ENCODE measurements at regions of chr9 and their contacts with region 1.

Region 1: DNA sequence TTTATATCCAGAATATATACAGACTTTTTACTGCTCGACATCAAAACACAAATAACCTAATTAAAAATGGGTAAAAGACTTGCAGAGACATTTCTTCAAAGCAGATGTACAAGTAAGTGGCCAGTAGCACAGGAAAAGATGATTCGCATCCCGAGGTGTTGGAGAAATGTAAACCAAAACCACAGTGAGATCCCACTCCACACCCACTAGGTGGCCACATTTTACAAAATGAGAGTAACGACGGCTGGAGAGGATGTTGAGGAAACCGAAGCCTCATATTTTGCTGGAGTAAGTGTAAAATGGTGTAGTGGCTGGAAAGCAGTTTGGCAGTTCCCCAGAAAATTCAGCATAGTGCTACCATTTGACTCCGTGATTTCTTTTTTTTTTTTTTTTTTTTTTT is 21.2 kb upstream of the GBGT1 start:
- DNase-seq: peak; percentile 32 to 60 (median 35)
- H3K4me3 ChIP-seq: no peak overlapping the region
- H3K4me3 Mint-ChIP-seq: peak overlapping the region in 1 of 8 donors; percentile 44
- H3K27ac ChIP-seq: no peak overlapping the region
- H3K27ac Mint-ChIP-seq: no peak overlapping the region
- H3K4me1 ChIP-seq: peaks cover 13% of the 10 kb centered on the region
- H3K4me1 Mint-ChIP-seq: peaks cover 8 to 10% (median 9%) of the 10 kb centered on the region in 4 donors
- H3K27me3 ChIP-seq: no peaks in the 10 kb centered on the region
- H3K27me3 Mint-ChIP-seq: peaks cover 15 to 26% of the 10 kb centered on the region in 2 donors

Region 2: GRCh38 chr9:133023117-133023890 is 161.7 kb before region 1 on chr9:
- CTCF ChIA-PET with region 1: interaction called, 4 read pairs
- POLR2A ChIA-PET with region 1: no interaction called
- intact Hi-C with region 1: loop called (anchors 10 kb)
- DNase-seq: peak in 4 of 5 donors; percentile 7 to 58 (median 14)
- H3K4me3 ChIP-seq: no peak overlapping the region
- H3K4me3 Mint-ChIP-seq: peak overlapping the region in 1 of 8 donors; percentile 54
- H3K27ac ChIP-seq: no peak overlapping the region
- H3K27ac Mint-ChIP-seq: peak overlapping the region in 2 of 7 donors; percentile 3 to 17
- H3K4me1 ChIP-seq: peaks cover 15% of the 10 kb centered on the region
- H3K4me1 Mint-ChIP-seq: peaks cover 4 to 22% (median 16%) of the 10 kb centered on the region in 4 donors
- H3K27me3 ChIP-seq: no peaks in the 10 kb centered on the region
- H3K27me3 Mint-ChIP-seq: peaks cover 1 to 3% of the 10 kb centered on the region in 2 donors

Region 3: GRCh38 chr9:133134891-133135745 is 49.8 kb before region 1 on chr9:
- CTCF ChIA-PET with region 1: no interaction called
- POLR2A ChIA-PET with region 1: no interaction called
- intact Hi-C with region 1: no loop called
- DNase-seq: peak in 3 of 5 donors; percentile 39 to 82 (median 44)
- H3K4me3 ChIP-seq: peak overlapping the region; percentile 3 to 27
- H3K4me3 Mint-ChIP-seq: peak overlapping the region in 7 of 8 donors; percentile 39 to 99 (median 79)
- H3K27ac ChIP-seq: peak overlapping the region; percentile 100
- H3K27ac Mint-ChIP-seq: peak overlapping the region; percentile 100
- H3K4me1 ChIP-seq: peaks cover 99% of the 10 kb centered on the region
- H3K4me1 Mint-ChIP-seq: peaks cover 42 to 83% (median 64%) of the 10 kb centered on the region in 4 donors
- H3K27me3 ChIP-seq: no peaks in the 10 kb centered on the region
- H3K27me3 Mint-ChIP-seq: no peaks in the 10 kb centered on the region

Region 4: DNA sequence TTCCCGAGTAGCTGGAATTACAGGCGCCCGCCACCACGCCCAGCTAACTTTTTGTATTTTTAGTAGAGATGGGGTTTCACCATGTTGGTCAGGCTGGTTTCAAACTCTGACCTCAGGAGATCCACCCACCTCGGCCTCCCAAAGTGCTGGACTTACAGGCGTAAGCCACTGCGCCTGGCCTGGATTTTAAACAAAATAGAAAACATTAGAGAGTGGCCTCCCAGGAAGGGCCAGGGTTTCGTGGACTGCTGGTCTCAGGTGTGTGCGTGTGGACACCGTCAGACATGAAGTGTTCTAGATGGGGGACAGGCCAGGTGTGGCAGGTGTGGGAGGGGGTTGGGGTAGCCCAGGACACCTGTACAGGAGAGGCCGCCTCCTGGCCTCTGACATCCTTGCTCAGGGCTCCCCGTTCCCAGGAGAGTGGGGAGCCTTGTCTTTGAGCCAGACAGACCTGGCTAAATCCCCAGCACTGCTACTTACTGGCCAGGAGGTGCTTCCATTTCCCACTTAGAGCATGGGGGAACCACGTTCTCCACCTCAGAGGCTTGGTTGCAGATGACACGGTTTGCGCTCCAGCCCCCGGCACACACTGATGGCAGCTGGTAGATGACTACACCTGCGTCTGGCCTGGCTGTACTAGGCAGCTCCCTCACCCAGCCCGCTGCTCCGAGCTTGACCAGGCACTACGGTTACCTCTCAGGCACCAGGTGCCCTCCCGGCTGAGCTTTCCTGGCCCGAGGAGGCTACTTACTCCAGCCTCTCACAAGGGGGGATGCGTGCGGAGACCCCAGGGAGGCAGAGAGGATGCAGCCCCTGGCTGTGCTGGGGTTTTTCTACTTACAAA is 14.0 kb before region 1 on chr9:
- CTCF ChIA-PET with region 1: interaction called, 38 read pairs
- POLR2A ChIA-PET with region 1: no interaction called
- intact Hi-C with region 1: no loop called
- DNase-seq: no peak
- H3K4me3 ChIP-seq: no peak overlapping the region
- H3K4me3 Mint-ChIP-seq: no peak overlapping the region
- H3K27ac ChIP-seq: no peak overlapping the region
- H3K27ac Mint-ChIP-seq: no peak overlapping the region
- H3K4me1 ChIP-seq: no peaks in the 10 kb centered on the region
- H3K4me1 Mint-ChIP-seq: no peaks in the 10 kb centered on the region
- H3K27me3 ChIP-seq: no peaks in the 10 kb centered on the region
- H3K27me3 Mint-ChIP-seq: peaks cover 0 to 3% of the 10 kb centered on the region in 2 donors

Region 5: DNA sequence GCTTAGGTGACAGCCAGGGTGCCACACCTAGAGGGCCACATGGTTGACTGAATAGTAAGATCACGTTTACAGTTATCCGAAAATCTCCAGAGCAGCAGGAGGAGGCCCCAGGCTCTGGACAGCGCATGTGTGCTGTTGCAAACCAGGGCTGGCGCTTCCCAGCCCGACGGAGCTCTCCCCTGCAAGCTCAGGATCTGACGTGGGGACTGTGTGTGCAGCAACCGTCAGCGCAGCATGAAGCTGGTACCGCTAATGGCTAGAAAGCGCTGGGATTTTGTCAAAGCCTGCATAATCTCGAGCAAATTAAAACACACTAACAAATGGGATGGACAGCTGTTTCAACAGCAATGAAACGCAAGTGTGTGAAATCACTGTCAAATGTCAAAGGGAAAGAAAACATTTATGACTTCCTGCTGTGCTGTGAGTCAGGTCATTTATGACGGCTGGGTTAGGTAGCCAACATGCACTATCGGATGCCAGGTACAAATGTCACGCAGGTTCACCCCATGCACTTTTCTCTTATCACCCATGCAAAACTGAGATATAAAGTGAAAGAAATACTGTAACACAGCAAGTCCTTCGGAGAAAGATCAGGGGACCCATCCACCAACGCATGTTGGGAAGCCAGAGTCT is 183.4 kb after region 1 on chr9:
- CTCF ChIA-PET with region 1: interaction called, 52 read pairs
- POLR2A ChIA-PET with region 1: interaction called, 3 read pairs
- intact Hi-C with region 1: loop called (anchors 1 kb)
- DNase-seq: peak in 1 of 5 donors; percentile 13
- H3K4me3 ChIP-seq: no peak overlapping the region
- H3K4me3 Mint-ChIP-seq: peak overlapping the region; percentile 53 to 88 (median 67)
- H3K27ac ChIP-seq: peak overlapping the region; percentile 85
- H3K27ac Mint-ChIP-seq: peak overlapping the region; percentile 81 to 99 (median 96)
- H3K4me1 ChIP-seq: peaks cover 70% of the 10 kb centered on the region
- H3K4me1 Mint-ChIP-seq: peaks cover 49 to 78% (median 51%) of the 10 kb centered on the region in 4 donors
- H3K27me3 ChIP-seq: no peaks in the 10 kb centered on the region
- H3K27me3 Mint-ChIP-seq: no peaks in the 10 kb centered on the region

Region 6: DNA sequence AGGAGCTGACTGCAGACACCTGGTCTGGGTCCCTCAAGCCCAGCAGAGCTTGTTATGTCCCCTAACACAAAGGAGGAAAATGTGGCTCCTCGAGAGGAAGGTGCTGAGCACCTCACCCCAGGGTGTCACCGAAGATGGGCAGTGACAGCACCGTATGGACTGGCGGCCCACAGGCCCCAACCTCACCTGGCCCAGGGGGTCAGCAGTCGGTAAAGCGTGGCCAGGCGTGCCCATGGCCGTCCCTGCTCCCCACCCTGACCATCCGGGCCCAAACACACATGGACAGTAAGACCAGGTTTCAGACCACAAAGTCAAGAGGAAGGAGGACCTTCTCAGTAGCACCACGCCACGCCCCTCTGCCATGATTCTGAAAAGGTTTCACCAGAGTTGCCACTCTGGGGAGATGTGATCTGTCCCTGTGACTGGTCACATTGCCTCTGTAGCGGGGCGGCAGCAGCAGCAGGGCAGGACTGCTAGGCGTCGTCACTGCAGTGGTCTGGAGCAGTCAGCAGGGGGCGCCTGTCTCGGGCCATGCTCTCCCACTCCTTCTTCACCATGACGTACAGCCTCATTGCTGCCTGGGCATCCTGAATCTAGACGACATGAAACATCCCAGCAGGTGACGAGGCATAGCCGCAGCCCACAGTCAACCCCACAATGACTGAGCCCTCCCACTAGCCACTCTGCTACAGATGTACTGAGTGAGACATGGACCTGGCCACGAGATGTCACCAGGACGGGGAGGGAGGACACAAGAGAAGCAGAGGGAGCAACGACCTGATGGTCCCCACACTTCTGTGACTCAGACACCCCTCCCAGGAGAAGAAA is 221.7 kb after region 1 on chr9:
- CTCF ChIA-PET with region 1: interaction called, 14 read pairs
- POLR2A ChIA-PET with region 1: no interaction called
- intact Hi-C with region 1: no loop called
- DNase-seq: peak; percentile 75 to 82 (median 76)
- H3K4me3 ChIP-seq: no peak overlapping the region
- H3K4me3 Mint-ChIP-seq: no peak overlapping the region
- H3K27ac ChIP-seq: peak overlapping the region; percentile 18
- H3K27ac Mint-ChIP-seq: peak overlapping the region; percentile 28 to 94 (median 83)
- H3K4me1 ChIP-seq: peaks cover 5% of the 10 kb centered on the region
- H3K4me1 Mint-ChIP-seq: peaks cover 7 to 11% (median 8%) of the 10 kb centered on the region in 4 donors
- H3K27me3 ChIP-seq: no peaks in the 10 kb centered on the region
- H3K27me3 Mint-ChIP-seq: no peaks in the 10 kb centered on the region

Region 7: GRCh38 chr9:133478851-133479711 is 294.1 kb after region 1 on chr9 and contains the start of gene SLC2A6:
- CTCF ChIA-PET with region 1: interaction called, 66 read pairs
- POLR2A ChIA-PET with region 1: no interaction called
- intact Hi-C with region 1: no loop called
- DNase-seq: peak; percentile 73 to 79 (median 77)
- H3K4me3 ChIP-seq: peak within 1 kb of the TSS; percentile 42 to 55
- H3K4me3 Mint-ChIP-seq: peak within 1 kb of the TSS; percentile 67 to 83 (median 76)
- H3K27ac ChIP-seq: peak within 1 kb of the TSS; percentile 34
- H3K27ac Mint-ChIP-seq: peak within 1 kb of the TSS in 5 of 7 donors; percentile 55 to 81 (median 65)
- H3K4me1 ChIP-seq: peaks cover 15% of the 10 kb centered on the region
- H3K4me1 Mint-ChIP-seq: peaks cover 5 to 10% (median 8%) of the 10 kb centered on the region in 4 donors
- H3K27me3 ChIP-seq: no peaks in the 10 kb centered on the region
- H3K27me3 Mint-ChIP-seq: peaks cover 0 to 2% of the 10 kb centered on the region in 2 donors
- total RNA-seq, gene SLC2A6: 1.6 to 2.5 TPM

Region 8: DNA sequence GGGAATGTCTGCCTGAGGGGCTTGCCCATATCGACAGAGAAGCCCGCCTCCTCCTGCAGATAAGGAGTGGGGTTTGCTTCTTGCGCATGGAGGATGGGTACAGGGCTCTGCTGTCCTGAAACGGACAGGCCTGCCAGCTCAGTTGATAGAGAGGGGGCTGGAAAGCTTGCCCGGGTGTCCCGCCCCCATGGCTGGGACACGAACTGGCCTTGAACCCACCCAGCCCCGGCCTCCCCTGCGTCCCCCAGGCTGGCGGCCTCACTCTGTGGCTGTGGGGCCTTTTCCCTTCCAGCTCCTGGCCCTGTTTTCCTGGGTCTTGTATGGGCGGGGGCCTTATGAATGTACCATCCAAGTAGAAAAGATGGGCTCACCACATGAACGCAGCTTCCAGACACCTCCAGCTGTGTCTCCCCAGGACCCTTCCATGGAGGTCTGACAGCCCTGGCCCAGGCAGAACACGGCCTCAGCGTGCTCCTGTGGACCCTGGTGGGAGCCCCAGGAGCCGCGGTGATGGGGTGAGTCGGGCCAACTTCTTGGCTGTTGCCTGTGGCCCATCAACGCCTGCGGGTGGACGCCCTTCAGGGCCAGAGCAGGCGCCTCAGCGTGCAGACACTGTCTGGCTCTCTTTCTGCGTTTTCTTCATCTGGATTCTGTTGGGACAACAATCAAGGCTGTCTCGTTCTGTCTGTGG is 309.8 kb after region 1 on chr9:
- CTCF ChIA-PET with region 1: interaction called, 11 read pairs
- POLR2A ChIA-PET with region 1: no interaction called
- intact Hi-C with region 1: no loop called
- DNase-seq: no peak
- H3K4me3 ChIP-seq: no peak overlapping the region
- H3K4me3 Mint-ChIP-seq: no peak overlapping the region
- H3K27ac ChIP-seq: no peak overlapping the region
- H3K27ac Mint-ChIP-seq: no peak overlapping the region
- H3K4me1 ChIP-seq: no peaks in the 10 kb centered on the region
- H3K4me1 Mint-ChIP-seq: no peaks in the 10 kb centered on the region
- H3K27me3 ChIP-seq: no peaks in the 10 kb centered on the region
- H3K27me3 Mint-ChIP-seq: peaks cover 5 to 9% of the 10 kb centered on the region in 2 donors